Naive thymus-derived CD4-positive, alpha-beta T cell (primary cell): ENCODE measurements at regions of chr15 and their contacts with region 1.

Region 1: DNA sequence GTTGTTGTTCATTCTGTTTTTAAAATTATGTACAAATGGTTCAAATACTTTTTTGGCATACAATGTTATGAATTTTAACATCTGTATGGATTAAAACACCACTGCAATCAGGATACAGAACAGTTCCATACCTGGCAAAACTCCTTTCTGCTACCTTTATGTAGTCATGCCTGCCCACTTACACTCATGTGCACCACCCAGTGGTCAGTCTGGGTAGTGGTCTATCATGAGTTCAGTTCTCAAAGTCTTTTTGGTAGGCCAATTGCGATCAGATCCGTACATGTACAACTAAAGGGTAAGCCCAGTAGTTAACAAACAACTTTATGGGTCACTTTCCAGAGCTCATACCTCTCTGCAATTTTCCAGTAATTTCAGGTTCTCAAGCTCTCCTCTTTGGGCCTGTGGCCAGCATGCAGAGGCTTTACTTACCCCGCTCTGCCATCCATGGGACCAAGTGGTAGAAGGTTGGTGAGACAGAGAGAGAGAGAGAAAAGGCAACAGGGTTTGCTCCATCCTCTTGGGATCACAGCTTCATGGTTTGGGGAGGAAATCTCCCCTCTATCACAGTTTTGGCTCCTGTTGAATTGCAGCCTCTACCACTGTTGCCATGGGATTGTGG is 63.9 kb upstream of the FAM98B start:
- DNase-seq: peak; percentile 5 to 58 (median 32)
- ATAC-seq: peak; percentile 78
- H3K4me3 ChIP-seq: no peak overlapping the region
- H3K4me3 Mint-ChIP-seq: no peak overlapping the region
- H3K27ac ChIP-seq: no peak overlapping the region
- H3K27ac Mint-ChIP-seq: no peak overlapping the region
- H3K4me1 ChIP-seq: no peaks in the 10 kb centered on the region
- H3K4me1 Mint-ChIP-seq: no peaks in the 10 kb centered on the region
- H3K27me3 ChIP-seq: no peaks in the 10 kb centered on the region
- H3K27me3 Mint-ChIP-seq: peaks cover 26 to 55% (median 40%) of the 10 kb centered on the region in 5 donors

Region 2: GRCh38 chr15:37995461-37996347 is 394.3 kb before region 1 on chr15:
- CTCF ChIA-PET with region 1: interaction called, 3 read pairs
- POLR2A ChIA-PET with region 1: no interaction called
- intact Hi-C with region 1: loop called (anchors 2 to 5 kb)
- DNase-seq: no peak
- ATAC-seq: no peak
- H3K4me3 ChIP-seq: no peak overlapping the region
- H3K4me3 Mint-ChIP-seq: no peak overlapping the region
- H3K27ac ChIP-seq: no peak overlapping the region
- H3K27ac Mint-ChIP-seq: no peak overlapping the region
- H3K4me1 ChIP-seq: no peaks in the 10 kb centered on the region
- H3K4me1 Mint-ChIP-seq: no peaks in the 10 kb centered on the region
- H3K27me3 ChIP-seq: no peaks in the 10 kb centered on the region
- H3K27me3 Mint-ChIP-seq: peaks cover 2 to 28% (median 13%) of the 10 kb centered on the region in 5 donors